Lower lobe of right lung (tissue), 2 donors: ENCODE measurements at regions of chr2 and their contacts with region 1.

Region 1: GRCh38 chr2:74587664-74588277 is 33.3 kb downstream of the DOK1 start:
- DNase-seq: peak; percentile 59
- ATAC-seq: peak; percentile 90 to 94
- H3K4me3 ChIP-seq: no peak overlapping the region
- H3K27ac ChIP-seq: no peak overlapping the region
- H3K4me1 ChIP-seq: no peaks in the 10 kb centered on the region
- H3K27me3 ChIP-seq: peaks cover 6% of the 10 kb centered on the region
- CTCF ChIP-seq: peak; percentile 72

Region 2: GRCh38 chr2:74482801-74483674 is 104.7 kb before region 1 on chr2 and contains the starts of genes CCDC142 and TTC31:
- intact Hi-C with region 1: loop called (anchors 2 kb)
- DNase-seq: peak; percentile 97
- ATAC-seq: peak; percentile 99
- H3K4me3 ChIP-seq: peak within 1 kb of the TSS; percentile 98
- H3K27ac ChIP-seq: peak within 1 kb of the TSS; percentile 92
- H3K4me1 ChIP-seq: peaks cover 32% of the 10 kb centered on the region
- H3K27me3 ChIP-seq: no peaks in the 10 kb centered on the region
- CTCF ChIP-seq: peak; percentile 88
- total RNA-seq, gene CCDC142: 20.2 TPM
- total RNA-seq, gene TTC31: 23.0 TPM

Region 3: DNA sequence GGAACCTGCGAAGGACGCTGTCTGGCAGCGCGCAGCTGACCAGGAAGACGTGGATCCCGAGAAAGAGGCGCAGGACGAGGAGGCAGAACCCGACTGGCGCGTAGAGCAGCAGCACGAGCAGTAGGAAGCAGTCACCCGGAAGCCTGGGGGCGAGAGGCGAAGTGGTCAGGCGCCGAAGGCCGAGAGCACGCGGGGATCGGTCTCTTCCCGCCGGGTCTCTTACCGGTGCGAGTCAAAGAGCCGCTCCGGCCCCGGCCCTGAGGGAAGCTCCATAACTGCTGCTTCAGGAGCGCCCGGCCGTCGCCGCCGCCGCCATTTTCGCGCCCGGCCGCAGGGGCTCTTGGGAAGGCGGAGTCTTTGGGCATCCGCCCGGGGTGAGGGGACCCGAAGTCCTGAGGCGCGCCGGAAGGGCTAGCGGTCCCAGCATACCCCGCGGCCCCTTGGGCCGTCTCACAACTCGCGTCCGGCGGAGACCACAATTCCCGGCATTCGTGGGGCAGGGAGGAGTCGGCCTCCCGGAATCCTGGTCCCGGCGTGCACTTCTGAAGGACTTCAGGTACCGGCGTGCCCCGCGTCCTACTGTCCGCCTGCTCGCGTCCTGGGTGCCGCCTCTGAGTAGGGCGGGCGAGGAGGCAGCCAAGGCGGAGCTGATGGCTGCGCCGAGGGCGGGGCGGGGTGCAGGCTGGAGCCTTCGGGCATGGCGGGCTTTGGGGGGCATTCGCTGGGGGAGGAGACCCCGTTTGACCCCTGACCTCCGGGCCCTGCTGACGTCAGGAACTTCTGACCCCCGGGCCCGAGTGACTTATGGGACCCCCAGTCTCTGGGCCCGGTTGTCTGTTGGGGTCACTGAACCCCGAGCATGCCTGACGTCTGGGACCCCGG is 58.2 kb before region 1 on chr2 and contains the starts of genes AUP1 and HTRA2:
- intact Hi-C with region 1: no loop called
- DNase-seq: peak; percentile 99
- ATAC-seq: peak; percentile 97
- H3K4me3 ChIP-seq: peak within 1 kb of the TSS; percentile 98
- H3K27ac ChIP-seq: peak within 1 kb of the TSS; percentile 94
- H3K4me1 ChIP-seq: peaks cover 28% of the 10 kb centered on the region
- H3K27me3 ChIP-seq: no peaks in the 10 kb centered on the region
- CTCF ChIP-seq: no peak
- total RNA-seq, gene AUP1: 122 TPM
- total RNA-seq, gene HTRA2: 34.3 TPM